ENCODE measurements at regions of chr1 and their contacts with region 1.

Region 1: DNA sequence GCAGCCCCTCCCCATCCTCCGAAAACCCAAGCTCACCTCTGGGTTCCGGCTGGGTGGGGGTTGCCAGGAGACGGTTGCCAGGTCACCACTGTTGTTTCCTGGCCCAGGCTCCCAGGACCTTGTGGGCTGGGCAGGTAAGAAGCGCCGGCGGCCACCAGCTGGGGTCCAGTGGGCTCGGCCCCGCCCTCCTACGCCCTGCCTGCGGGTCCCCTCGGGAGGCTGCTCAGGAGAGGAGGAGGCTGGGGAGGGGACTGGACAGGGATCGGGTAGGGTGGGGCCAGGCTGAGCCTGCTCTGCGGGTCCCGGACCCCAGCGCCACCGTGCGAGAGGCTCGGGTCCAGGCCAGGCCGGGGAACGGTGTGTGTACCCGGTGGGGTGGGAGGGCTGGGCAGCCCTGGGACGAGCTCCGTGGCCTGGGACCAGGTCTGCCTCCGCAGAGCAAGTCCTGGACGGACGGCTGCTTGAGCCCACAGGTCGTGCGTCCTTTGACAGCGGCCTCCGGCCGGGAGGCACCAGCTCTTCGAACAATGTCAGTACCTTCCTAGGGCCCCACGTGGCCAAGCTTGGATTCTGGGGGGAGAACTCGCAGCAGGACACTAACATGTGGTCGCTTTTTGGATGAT is at the start of gene TTLL10:
- DNase-seq: peak; percentile 84
- ATAC-seq: peak; percentile 31
- H3K4me3 ChIP-seq: peak within 1 kb of the TSS in 2 of 5 experiments; percentile 15 to 22
- H3K4me3 Mint-ChIP-seq: peak within 1 kb of the TSS; percentile 55
- H3K27ac ChIP-seq: no peak within 1 kb of the TSS
- H3K27ac Mint-ChIP-seq: peak within 1 kb of the TSS; percentile 50
- H3K4me1 ChIP-seq: peaks cover 57 to 70% of the 10 kb centered on the region in 2 donors
- H3K4me1 Mint-ChIP-seq: peaks cover 52% of the 10 kb centered on the region
- H3K27me3 ChIP-seq: peaks cover 0 to 44% (median 21%) of the 10 kb centered on the region in 4 experiments
- H3K27me3 Mint-ChIP-seq: peaks cover 12% of the 10 kb centered on the region
- CTCF ChIP-seq: no peak
- total RNA-seq, gene TTLL10: 0.37 and 0.61 TPM in 2 replicates

Region 2: DNA sequence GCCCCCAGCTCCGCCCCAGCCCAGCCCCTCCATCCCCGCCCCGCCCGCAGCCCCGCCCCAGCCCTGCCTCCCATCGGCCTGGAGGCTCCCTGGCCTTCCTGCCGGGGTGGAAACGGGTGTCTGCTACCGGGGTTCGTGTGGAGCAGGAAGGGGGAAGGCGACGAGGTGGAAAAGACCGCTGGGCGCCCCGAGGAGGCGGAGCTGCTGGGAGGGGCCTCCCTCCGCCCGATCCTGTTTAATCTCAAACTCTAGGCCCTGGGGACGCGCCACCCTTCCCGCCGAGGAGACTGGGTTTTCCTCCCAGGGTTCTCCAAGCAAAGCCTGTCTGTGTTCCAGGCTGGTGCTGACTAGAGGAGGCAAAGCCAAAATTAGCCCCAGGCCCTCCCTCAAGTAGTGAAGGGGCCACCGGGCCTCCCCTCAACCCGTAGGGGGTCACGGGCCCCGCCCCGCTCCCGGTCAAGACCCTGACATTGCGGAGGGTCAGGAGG is 16.4 kb before region 1 on chr1:
- CTCF ChIA-PET with region 1: interaction called, 3 read pairs
- POLR2A ChIA-PET with region 1: interaction called, 14 read pairs
- intact Hi-C with region 1: no loop called
- DNase-seq: peak; percentile 74
- ATAC-seq: peak; percentile 64
- H3K4me3 ChIP-seq: peak overlapping the region; percentile 52 to 93 (median 87)
- H3K4me3 Mint-ChIP-seq: peak overlapping the region; percentile 86
- H3K27ac ChIP-seq: peak overlapping the region; percentile 94 to 97
- H3K27ac Mint-ChIP-seq: peak overlapping the region; percentile 89
- H3K4me1 ChIP-seq: peaks cover 8 to 23% of the 10 kb centered on the region in 2 donors
- H3K4me1 Mint-ChIP-seq: peaks cover 5% of the 10 kb centered on the region
- H3K27me3 ChIP-seq: no peaks in the 10 kb centered on the region
- H3K27me3 Mint-ChIP-seq: no peaks in the 10 kb centered on the region
- CTCF ChIP-seq: no peak

Measured in B cell (primary cell).